ENCODE measurements at regions of chr17 and their contacts with region 1.

Region 1: GRCh38 chr17:48625495-48626244 is 488 bp downstream of the HOXB9 start:
- DNase-seq: peak in 1 of 2 experiments; percentile 77
- H3K4me3 ChIP-seq: peak overlapping the region in 2 of 4 experiments; percentile 19 to 52; a peak in 5 of 8 replicates
- H3K27ac ChIP-seq: no peak overlapping the region
- H3K4me1 ChIP-seq: peaks cover 0 to 11% (median 5%) of the 10 kb centered on the region in 4 experiments; a peak in 5 of 7 replicates
- H3K27me3 ChIP-seq: peaks cover 98 to 100% (median 100%) of the 10 kb centered on the region in 4 experiments
- CTCF ChIP-seq: no peak
- EP300 ChIP-seq: no peak
- POLR2A ChIP-seq: no peak
- RAD21 ChIP-seq: no peak

Region 2: GRCh38 chr17:48636177-48637018 is 10.7 kb after region 1 on chr17:
- CTCF ChIA-PET with region 1: interaction called, 15 read pairs
- POLR2A ChIA-PET with region 1: interaction called, 3 read pairs
- DNase-seq: peak; percentile 85 to 98
- H3K4me3 ChIP-seq: peak overlapping the region in 1 of 4 experiments; percentile 13; a peak in 1 of 8 replicates
- H3K27ac ChIP-seq: no peak overlapping the region
- H3K4me1 ChIP-seq: peaks cover 0 to 5% (median 1%) of the 10 kb centered on the region in 4 experiments; a peak in 3 of 7 replicates
- H3K27me3 ChIP-seq: peaks cover 98 to 100% (median 99%) of the 10 kb centered on the region in 4 experiments
- CTCF ChIP-seq: peak; percentile 77 to 82 (median 79)
- EP300 ChIP-seq: no peak
- POLR2A ChIP-seq: no peak
- RAD21 ChIP-seq: peak; percentile 34 to 48; a peak in 3 of 4 replicates

Region 3: DNA sequence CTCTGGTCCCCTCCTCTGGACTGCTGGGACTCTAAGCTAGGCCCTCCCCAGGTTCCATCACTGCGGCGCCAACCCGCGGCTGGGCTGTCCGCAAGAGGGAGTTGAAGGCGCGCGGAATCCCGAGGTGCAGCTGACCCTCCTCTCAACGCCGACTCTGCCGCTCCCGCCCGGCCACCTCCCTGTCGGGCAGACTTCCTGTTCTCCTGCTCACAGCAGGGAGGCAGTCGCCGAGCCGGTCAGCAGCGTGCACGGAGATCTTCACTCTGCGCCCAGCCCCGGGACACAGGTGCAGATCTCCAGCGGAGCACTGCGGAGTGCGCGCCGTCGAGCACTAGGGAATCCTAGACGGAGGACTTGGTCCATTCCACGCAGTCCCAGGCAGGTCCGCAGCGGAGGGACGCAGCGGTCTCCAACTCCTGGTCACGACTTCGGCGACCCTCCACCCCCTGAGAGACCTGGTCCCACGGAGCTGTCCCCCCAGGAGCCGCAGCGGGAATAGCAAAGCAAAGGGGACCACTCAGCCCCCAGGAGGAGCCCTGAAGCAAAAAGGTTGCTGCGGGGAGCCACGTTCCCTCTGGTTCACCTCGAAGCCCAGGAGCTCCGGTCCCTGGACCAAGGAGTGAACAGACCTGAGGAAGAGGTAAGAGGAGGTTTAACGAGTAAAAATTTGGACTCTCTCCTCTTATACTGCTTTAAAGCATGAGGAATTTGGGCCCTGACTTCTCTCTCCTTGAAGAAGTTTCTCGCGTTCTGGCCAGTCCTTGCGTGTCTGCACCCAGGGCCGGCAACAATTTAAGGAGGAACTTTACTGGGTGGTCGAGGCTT is 17.0 kb after region 1 on chr17:
- CTCF ChIA-PET with region 1: interaction called, 15 read pairs
- POLR2A ChIA-PET with region 1: no interaction called
- DNase-seq: peak in 1 of 2 experiments; percentile 79
- H3K4me3 ChIP-seq: no peak overlapping the region
- H3K27ac ChIP-seq: no peak overlapping the region
- H3K4me1 ChIP-seq: peaks cover 0 to 13% (median 9%) of the 10 kb centered on the region in 4 experiments; a peak in 5 of 7 replicates
- H3K27me3 ChIP-seq: peaks cover 98 to 100% (median 100%) of the 10 kb centered on the region in 4 experiments
- CTCF ChIP-seq: peak; percentile 38 to 46 (median 41)
- EP300 ChIP-seq: no peak
- POLR2A ChIP-seq: no peak
- RAD21 ChIP-seq: peak in 1 of 2 experiments; percentile 28; a peak in 2 of 4 replicates

Measured in H1 (cell line).